ENCODE measurements at regions of chr1 and their contacts with region 1.

Region 1: DNA sequence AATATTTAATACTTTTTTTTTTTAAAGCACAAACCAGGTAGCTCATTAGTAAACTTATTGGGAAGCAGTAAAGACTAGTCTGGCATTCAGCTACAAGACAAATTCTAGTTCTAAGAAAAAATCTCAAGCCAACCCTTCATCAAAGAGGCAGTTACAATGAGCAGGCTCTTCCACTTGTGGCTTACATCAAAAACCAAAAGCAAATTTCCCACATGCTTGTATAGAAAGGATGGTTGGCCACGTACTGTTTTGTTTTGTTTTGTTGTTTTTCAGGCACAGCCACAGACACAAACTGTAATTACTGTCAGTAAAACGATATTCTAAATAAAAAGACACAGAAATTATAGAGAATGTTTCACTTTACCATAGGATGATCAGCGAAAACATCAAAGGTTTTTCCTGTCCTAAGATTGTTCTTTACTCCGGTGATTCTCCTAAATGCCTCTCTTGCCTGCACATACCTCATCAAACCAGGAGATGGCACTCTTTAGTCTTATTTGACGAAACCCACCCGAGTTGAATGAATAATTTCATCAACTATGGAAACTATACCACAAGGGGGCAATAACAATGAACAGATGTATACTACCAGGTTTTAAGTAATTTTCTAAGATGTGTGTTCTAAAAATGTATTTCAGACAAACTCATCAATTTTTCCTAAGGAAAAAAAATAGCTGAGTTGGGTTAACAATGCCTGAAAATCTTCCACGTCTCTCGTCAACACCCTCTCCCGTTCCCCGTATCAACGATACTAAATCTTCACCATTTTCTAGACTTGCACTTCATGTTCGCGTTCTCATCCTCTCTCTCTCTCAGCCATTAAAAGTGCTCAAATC is 26.9 kb downstream of the RPL5 start:
- DNase-seq: peak; percentile 80 to 90 (median 88)
- H3K4me3 ChIP-seq: peak overlapping the region in 4 of 7 experiments; percentile 4 to 72 (median 17)
- H3K27ac ChIP-seq: no peak overlapping the region
- H3K4me1 ChIP-seq: peaks cover 0 to 4% (median 0%) of the 10 kb centered on the region in 4 experiments
- H3K27me3 ChIP-seq: peaks cover 0 to 4% (median 0%) of the 10 kb centered on the region in 5 experiments

Region 2: GRCh38 chr1:92872719-92873118 is 13.9 kb after region 1 on chr1:
- CTCF ChIA-PET with region 1: interaction called, 13 read pairs
- POLR2A ChIA-PET with region 1: no interaction called
- DNase-seq: no peak
- H3K4me3 ChIP-seq: no peak overlapping the region
- H3K27ac ChIP-seq: no peak overlapping the region
- H3K4me1 ChIP-seq: no peaks in the 10 kb centered on the region
- H3K27me3 ChIP-seq: no peaks in the 10 kb centered on the region

Region 3: GRCh38 chr1:92909321-92909720 is 50.5 kb after region 1 on chr1:
- CTCF ChIA-PET with region 1: no interaction called
- POLR2A ChIA-PET with region 1: no interaction called
- DNase-seq: no peak
- H3K4me3 ChIP-seq: no peak overlapping the region
- H3K27ac ChIP-seq: no peak overlapping the region
- H3K4me1 ChIP-seq: no peaks in the 10 kb centered on the region
- H3K27me3 ChIP-seq: peaks cover 0 to 3% (median 0%) of the 10 kb centered on the region in 5 experiments

Region 4: GRCh38 chr1:92960395-92961130 is 101.8 kb after region 1 on chr1:
- CTCF ChIA-PET with region 1: interaction called, 33 read pairs
- POLR2A ChIA-PET with region 1: no interaction called
- DNase-seq: peak; percentile 82 to 86 (median 83)
- H3K4me3 ChIP-seq: peak overlapping the region; percentile 53 to 92 (median 70)
- H3K27ac ChIP-seq: peak overlapping the region in 1 of 2 experiments; percentile 86
- H3K4me1 ChIP-seq: peaks cover 0 to 19% (median 14%) of the 10 kb centered on the region in 4 experiments
- H3K27me3 ChIP-seq: peaks cover 0 to 14% (median 0%) of the 10 kb centered on the region in 5 experiments

Region 5: DNA sequence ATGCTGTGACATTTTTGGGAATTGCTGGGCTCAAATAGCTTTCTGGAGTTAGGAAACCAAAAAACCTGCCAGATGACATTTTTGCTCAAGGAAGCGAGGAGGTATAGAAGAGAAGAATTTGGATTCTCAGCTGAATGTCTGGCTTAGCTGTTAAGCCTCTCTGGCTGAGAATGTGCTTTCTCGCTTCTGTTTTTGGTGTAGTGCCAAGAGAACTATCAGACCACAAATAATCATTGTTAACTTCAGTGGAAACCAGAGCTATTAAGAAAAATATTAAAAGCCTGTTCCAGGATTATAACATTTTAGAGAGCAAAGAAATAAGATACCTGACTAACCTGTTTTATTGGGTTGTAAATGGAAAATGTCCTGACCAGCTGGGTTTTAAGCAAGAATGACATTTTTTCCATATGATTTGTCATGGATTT is 142.0 kb after region 1 on chr1:
- CTCF ChIA-PET with region 1: interaction called, 35 read pairs
- POLR2A ChIA-PET with region 1: no interaction called
- DNase-seq: no peak
- H3K4me3 ChIP-seq: no peak overlapping the region
- H3K27ac ChIP-seq: no peak overlapping the region
- H3K4me1 ChIP-seq: no peaks in the 10 kb centered on the region
- H3K27me3 ChIP-seq: peaks cover 0 to 3% (median 0%) of the 10 kb centered on the region in 5 experiments